Activated CD4-positive, alpha-beta memory T cell treated with anti-CD3 and anti-CD28 coated beads, Interleukin-2, amount 10 ng/mL, durations not matched to agents 7 days and 5 days (primary cell): ENCODE measurements at regions of chr1 and their contacts with region 1.

Region 1: GRCh38 chr1:67294836-67295617 is 12.6 kb upstream of the IL12RB2 start:
- DNase-seq: peak; percentile 56
- H3K4me3 Mint-ChIP-seq: peak overlapping the region; percentile 55
- H3K27ac Mint-ChIP-seq: peak overlapping the region; percentile 92
- H3K4me1 Mint-ChIP-seq: peaks cover 40% of the 10 kb centered on the region
- H3K27me3 Mint-ChIP-seq: no peaks in the 10 kb centered on the region

Region 2: DNA sequence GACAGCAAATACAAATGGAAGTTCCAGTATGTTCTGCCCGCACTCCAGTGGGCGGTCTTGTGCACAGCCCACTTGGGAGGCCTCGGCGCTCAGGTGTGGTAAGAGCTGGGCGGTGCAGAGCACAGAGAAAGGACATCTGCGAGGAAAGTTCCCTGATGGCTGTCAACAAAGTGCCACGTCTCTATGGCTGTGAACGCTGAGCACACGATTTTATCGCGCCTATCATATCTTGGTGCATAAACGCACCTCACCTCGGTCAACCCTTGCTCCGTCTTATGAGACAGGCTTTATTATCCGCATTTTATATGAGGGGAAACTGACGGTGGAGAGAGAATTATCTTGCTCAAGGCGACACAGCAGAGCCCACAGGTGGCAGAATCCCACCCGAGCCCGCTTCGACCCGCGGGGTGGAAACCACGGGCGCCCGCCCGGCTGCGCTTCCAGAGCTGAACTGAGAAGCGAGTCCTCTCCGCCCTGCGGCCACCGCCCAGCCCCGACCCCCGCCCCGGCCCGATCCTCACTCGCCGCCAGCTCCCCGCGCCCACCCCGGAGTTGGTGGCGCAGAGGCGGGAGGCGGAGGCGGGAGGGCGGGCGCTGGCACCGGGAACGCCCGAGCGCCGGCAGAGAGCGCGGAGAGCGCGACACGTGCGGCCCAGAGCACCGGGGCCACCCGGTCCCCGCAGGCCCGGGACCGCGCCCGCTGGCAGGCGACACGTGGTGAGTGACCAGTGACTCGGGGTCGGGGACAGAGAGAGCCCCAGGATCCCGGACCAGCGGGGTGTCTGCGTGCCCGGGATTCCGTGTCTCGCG is 12.4 kb after region 1 on chr1 and contains the start of gene IL12RB2:
- CTCF ChIA-PET with region 1: interaction called, 3 read pairs
- POLR2A ChIA-PET with region 1: interaction called, 13 read pairs
- DNase-seq: peak; percentile 73
- H3K4me3 Mint-ChIP-seq: peak within 1 kb of the TSS; percentile 97
- H3K27ac Mint-ChIP-seq: peak within 1 kb of the TSS; percentile 94
- H3K4me1 Mint-ChIP-seq: peaks cover 72% of the 10 kb centered on the region
- H3K27me3 Mint-ChIP-seq: no peaks in the 10 kb centered on the region
- total RNA-seq, gene IL12RB2: 75.5 to 76.0 TPM

Region 3: GRCh38 chr1:67314696-67315095 is 19.7 kb after region 1 on chr1:
- CTCF ChIA-PET with region 1: no interaction called
- POLR2A ChIA-PET with region 1: interaction called, 18 read pairs
- DNase-seq: no peak
- H3K4me3 Mint-ChIP-seq: peak overlapping the region; percentile 47
- H3K27ac Mint-ChIP-seq: peak overlapping the region; percentile 87
- H3K4me1 Mint-ChIP-seq: peaks cover 53% of the 10 kb centered on the region
- H3K27me3 Mint-ChIP-seq: no peaks in the 10 kb centered on the region

Region 4: DNA sequence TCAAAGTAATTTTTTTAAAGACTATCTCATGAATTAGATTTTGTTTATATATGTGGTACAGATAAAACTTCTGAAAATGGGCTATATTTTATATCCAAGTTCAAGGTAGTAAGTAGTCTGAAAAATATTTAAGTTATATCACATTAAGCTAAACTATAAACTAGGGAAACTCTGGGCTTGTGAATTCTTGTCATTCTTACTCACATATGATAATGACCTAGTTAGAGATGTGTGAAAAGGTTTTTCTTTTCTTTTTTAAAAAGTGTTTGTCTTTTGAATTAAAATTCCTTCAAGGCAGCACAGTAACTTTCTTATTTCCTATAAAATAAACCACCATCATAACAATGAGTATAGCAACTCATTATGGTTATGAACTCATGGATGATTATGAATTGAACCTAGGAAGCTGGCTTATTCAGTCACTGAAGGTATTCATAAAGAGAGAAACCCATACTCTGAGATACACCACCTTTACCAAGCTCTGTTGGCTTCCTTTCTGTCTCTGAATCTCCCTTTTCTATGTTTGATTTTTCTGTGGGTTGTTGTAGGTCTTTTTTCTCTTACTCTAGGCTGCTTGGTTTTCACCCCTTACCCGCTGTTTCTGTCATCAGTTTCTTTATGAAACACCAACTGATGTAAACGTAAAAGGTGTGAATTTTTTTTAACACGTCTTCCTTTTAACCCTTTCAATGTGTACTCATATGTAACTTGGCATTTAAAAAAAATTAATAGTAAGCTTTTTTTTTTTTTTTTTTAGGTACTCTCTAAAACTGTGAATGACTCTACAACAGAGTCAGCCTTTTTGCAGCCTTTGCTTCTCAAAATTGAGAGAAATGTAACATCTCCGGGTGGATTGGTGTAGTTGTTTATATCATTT is 37.9 kb after region 1 on chr1:
- CTCF ChIA-PET with region 1: interaction called, 6 read pairs
- POLR2A ChIA-PET with region 1: interaction called, 11 read pairs
- DNase-seq: peak; percentile 48
- H3K4me3 Mint-ChIP-seq: peak overlapping the region; percentile 25
- H3K27ac Mint-ChIP-seq: peak overlapping the region; percentile 89
- H3K4me1 Mint-ChIP-seq: peaks cover 82% of the 10 kb centered on the region
- H3K27me3 Mint-ChIP-seq: no peaks in the 10 kb centered on the region

Region 5: GRCh38 chr1:67339623-67340343 is 44.8 kb after region 1 on chr1:
- CTCF ChIA-PET with region 1: interaction called, 3 read pairs
- POLR2A ChIA-PET with region 1: interaction called, 10 read pairs
- DNase-seq: no peak
- H3K4me3 Mint-ChIP-seq: peak overlapping the region; percentile 34
- H3K27ac Mint-ChIP-seq: peak overlapping the region; percentile 73
- H3K4me1 Mint-ChIP-seq: peaks cover 79% of the 10 kb centered on the region
- H3K27me3 Mint-ChIP-seq: no peaks in the 10 kb centered on the region